Mammary epithelial cell (primary cell): ENCODE measurements at regions of chr22 and their contacts with region 1.

Region 1: DNA sequence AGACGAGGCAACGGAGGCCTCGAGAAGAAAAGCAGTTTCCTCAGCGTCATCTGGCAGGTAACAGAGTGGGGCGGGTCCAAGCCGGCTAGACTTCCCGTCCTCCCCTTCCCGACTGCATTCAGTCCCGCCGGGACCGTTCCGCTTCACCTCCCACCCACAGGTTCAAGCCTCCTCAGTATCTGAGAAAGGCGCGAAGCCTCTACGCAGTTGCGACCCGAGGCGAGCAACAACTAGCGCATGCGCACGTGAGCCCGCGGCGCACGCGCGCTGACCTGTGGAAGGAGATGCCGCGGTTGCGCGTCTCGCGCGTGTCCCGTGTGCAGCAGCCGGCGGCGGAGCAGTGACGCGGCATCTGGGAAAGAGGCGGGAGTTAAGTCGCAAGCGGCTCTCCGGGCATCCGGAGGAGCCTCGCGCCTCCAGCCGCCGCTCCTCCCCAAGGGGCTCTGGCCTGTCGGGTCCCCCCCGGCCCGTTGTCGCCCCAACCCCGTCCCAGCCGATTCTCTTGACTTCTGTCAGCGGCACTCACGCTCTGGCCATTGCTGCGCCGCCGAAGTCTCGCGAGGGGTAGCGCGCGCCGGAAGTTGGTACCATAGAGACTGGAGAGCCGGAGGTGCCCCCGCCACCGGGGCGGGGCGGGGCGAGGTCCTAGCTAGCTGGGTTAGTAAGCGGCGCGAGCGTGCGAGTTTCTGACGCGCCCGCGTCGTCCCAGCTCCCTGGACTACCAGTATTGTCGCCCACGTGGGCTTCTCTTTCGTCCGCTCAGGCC is at the start of gene THAP7:
- DNase-seq: peak; percentile 94
- H3K4me3 ChIP-seq: peak within 1 kb of the TSS; percentile 54 to 95 (median 68)
- H3K27ac ChIP-seq: peak within 1 kb of the TSS; percentile 94
- H3K4me1 ChIP-seq: peaks cover 29% of the 10 kb centered on the region
- H3K27me3 ChIP-seq: no peaks in the 10 kb centered on the region
- CTCF ChIP-seq: no peak
- total RNA-seq, gene THAP7: 17.3 to 23.6 TPM

Region 2: DNA sequence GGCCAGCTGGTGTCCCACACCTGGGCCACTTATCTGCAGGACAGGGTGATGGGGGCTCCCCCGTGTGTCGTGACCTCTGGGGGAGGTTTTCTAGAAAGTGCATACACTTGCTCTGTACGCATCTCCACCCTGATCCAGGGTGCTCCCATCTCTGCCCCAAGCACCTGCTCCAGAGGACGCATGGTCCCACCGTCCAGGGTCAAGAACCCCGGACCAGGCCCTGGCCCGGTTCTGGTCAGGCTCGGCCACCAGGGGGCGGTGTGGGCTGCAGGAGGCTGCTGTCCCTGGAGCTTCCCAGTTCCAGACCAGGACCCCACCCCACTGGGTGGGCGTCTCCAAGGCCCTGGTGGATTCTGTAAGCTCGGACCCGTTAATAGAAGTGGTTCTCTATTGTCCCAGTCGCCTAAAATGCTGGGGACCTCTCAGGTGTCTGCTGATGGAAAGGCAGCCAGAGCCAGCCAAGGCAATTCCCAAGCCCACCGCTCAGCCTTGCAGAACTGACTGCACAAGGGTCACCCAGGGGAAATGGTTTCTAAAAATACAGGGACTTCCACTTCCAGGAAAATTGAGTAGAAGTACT is 1322.1 kb before region 1 on chr22:
- CTCF ChIA-PET with region 1: interaction called, 15 read pairs
- dilution Hi-C with region 1: no loop called
- in situ Hi-C with region 1: no loop called
- intact Hi-C with region 1: no loop called
- DNase-seq: no peak
- H3K4me3 ChIP-seq: no peak overlapping the region
- H3K27ac ChIP-seq: no peak overlapping the region
- H3K4me1 ChIP-seq: no peaks in the 10 kb centered on the region
- H3K27me3 ChIP-seq: no peaks in the 10 kb centered on the region
- CTCF ChIP-seq: peak; percentile 66 to 96

Region 3: GRCh38 chr22:20803696-20804324 is 197.9 kb before region 1 on chr22:
- CTCF ChIA-PET with region 1: no interaction called
- dilution Hi-C with region 1: no loop called
- in situ Hi-C with region 1: no loop called
- intact Hi-C with region 1: loop called (anchors 5 kb)
- DNase-seq: no peak
- H3K4me3 ChIP-seq: no peak overlapping the region
- H3K27ac ChIP-seq: no peak overlapping the region
- H3K4me1 ChIP-seq: no peaks in the 10 kb centered on the region
- H3K27me3 ChIP-seq: no peaks in the 10 kb centered on the region
- CTCF ChIP-seq: peak; percentile 47 to 60

Region 4: DNA sequence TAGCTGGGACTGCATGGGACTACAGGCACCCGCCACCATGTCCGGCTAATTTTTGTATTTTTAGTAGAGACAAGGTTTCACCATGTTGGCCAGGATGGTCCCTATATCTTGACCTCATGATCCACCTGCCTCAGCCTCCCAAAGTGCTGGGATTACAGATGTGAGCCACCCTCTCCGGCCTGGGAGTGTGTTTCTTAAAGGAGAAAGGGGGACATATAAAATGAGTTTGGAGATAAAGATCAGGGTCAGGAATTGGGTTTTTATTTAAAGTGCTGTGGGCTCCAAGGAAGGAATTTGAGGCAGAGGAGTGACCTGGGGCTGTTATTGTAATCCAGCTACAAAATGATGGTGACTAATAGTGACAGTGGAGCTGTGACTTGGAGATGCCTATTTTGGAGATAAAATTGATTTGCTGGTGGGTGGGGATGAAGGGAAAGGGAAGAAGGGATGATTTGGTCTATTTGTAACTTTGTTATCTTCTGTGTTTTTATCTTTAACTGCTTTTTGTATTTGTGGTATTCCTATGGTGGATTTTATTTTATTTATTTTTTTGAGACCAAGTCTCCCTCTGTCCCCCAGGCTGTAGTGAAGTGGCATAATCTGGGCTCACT is 79.5 kb before region 1 on chr22:
- CTCF ChIA-PET with region 1: no interaction called
- dilution Hi-C with region 1: loop called (anchors 5 kb)
- in situ Hi-C with region 1: no loop called
- intact Hi-C with region 1: no loop called
- DNase-seq: no peak
- H3K4me3 ChIP-seq: no peak overlapping the region
- H3K27ac ChIP-seq: no peak overlapping the region
- H3K4me1 ChIP-seq: peaks cover 14% of the 10 kb centered on the region
- H3K27me3 ChIP-seq: no peaks in the 10 kb centered on the region
- CTCF ChIP-seq: no peak

Region 5: GRCh38 chr22:21014202-21014725 is 12.5 kb after region 1 on chr22:
- CTCF ChIA-PET with region 1: no interaction called
- dilution Hi-C with region 1: no loop called
- in situ Hi-C with region 1: no loop called
- intact Hi-C with region 1: loop called (anchors 1 kb)
- DNase-seq: peak; percentile 78
- H3K4me3 ChIP-seq: peak overlapping the region; percentile 51 to 64 (median 63)
- H3K27ac ChIP-seq: peak overlapping the region; percentile 55
- H3K4me1 ChIP-seq: peaks cover 20% of the 10 kb centered on the region
- H3K27me3 ChIP-seq: no peaks in the 10 kb centered on the region
- CTCF ChIP-seq: no peak

Region 6: DNA sequence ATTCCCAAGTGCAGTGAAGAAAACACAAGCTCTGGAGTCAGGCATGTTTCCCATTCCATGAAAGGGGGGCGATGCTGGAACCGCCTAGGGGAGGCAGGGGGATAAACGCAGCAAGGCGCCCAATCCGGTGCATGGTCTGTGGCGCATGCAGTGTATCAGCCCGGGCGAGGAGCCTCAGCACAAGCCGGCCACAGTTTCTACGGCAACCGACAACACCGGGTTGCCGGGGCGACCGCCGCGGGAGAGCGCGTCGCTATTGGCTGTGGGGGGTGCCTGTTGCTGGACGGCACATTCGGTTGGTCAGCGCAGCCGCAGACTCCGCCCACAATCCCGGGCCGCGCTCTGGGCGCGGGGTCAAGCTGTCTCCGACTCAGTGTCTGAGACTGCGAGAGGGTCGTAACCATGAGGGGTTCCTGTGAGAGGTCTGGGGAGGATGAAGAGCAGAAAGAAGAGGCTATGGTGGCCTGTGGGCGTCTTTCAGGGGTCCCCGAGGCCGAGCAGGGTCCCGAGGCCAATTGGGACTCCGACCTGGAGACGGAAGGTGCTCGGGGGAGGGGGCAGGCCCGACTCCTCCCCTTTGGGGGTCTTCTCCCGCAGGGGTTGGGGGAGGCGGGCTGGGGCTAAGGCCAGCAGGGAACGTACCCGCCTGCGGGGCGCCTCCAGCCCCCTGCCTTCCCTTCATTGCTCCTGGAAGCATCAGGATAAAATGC is 44.0 kb after region 1 on chr22 and contains the start of gene LRRC74B:
- CTCF ChIA-PET with region 1: no interaction called
- dilution Hi-C with region 1: no loop called
- in situ Hi-C with region 1: no loop called
- intact Hi-C with region 1: loop called (anchors 5 kb)
- DNase-seq: peak; percentile 87
- H3K4me3 ChIP-seq: peak within 1 kb of the TSS in 2 of 3 experiments; percentile 25 to 43
- H3K27ac ChIP-seq: peak within 1 kb of the TSS; percentile 33
- H3K4me1 ChIP-seq: peaks cover 24% of the 10 kb centered on the region
- H3K27me3 ChIP-seq: no peaks in the 10 kb centered on the region
- CTCF ChIP-seq: no peak
- total RNA-seq, gene LRRC74B: not detected